Activated CD4-positive, alpha-beta memory T cell treated with anti-CD3 and anti-CD28 coated beads for 36 hours (primary cell): ENCODE measurements at regions of chr6 and their contacts with region 1.

Region 1: GRCh38 chr6:28266962-28267694 is at the start of gene ZSCAN26:
- DNase-seq: peak; percentile 89
- H3K4me3 Mint-ChIP-seq: no peak within 1 kb of the TSS
- H3K27ac Mint-ChIP-seq: no peak within 1 kb of the TSS
- H3K4me1 Mint-ChIP-seq: peaks cover 36% of the 10 kb centered on the region
- H3K27me3 Mint-ChIP-seq: no peaks in the 10 kb centered on the region
- total RNA-seq, gene ZSCAN26: 6.0 to 6.4 TPM

Region 2: GRCh38 chr6:27374824-27375612 is 892.1 kb before region 1 on chr6:
- CTCF ChIA-PET with region 1: no interaction called
- POLR2A ChIA-PET with region 1: no interaction called
- intact Hi-C with region 1: no loop called
- DNase-seq: peak; percentile 86
- H3K4me3 Mint-ChIP-seq: peak overlapping the region; percentile 81
- H3K27ac Mint-ChIP-seq: peak overlapping the region; percentile 59
- H3K4me1 Mint-ChIP-seq: peaks cover 19% of the 10 kb centered on the region
- H3K27me3 Mint-ChIP-seq: no peaks in the 10 kb centered on the region

Region 3: GRCh38 chr6:28080631-28081485 is 186.3 kb before region 1 on chr6:
- CTCF ChIA-PET with region 1: no interaction called
- POLR2A ChIA-PET with region 1: no interaction called
- intact Hi-C with region 1: loop called (anchors 5 kb)
- DNase-seq: peak; percentile 92
- H3K4me3 Mint-ChIP-seq: peak overlapping the region; percentile 96
- H3K27ac Mint-ChIP-seq: peak overlapping the region; percentile 97
- H3K4me1 Mint-ChIP-seq: peaks cover 20% of the 10 kb centered on the region
- H3K27me3 Mint-ChIP-seq: no peaks in the 10 kb centered on the region

Region 4: GRCh38 chr6:28212510-28213212 is 54.5 kb before region 1 on chr6:
- CTCF ChIA-PET with region 1: no interaction called
- POLR2A ChIA-PET with region 1: no interaction called
- intact Hi-C with region 1: loop called (anchors 5 kb)
- DNase-seq: peak; percentile 80
- H3K4me3 Mint-ChIP-seq: peak overlapping the region; percentile 75
- H3K27ac Mint-ChIP-seq: peak overlapping the region; percentile 59
- H3K4me1 Mint-ChIP-seq: peaks cover 19% of the 10 kb centered on the region
- H3K27me3 Mint-ChIP-seq: peaks cover 67% of the 10 kb centered on the region

Region 5: GRCh38 chr6:28252009-28252975 is 14.8 kb before region 1 on chr6 and contains the start of gene ZKSCAN4:
- CTCF ChIA-PET with region 1: interaction called, 10 read pairs
- POLR2A ChIA-PET with region 1: interaction called, 12 read pairs
- intact Hi-C with region 1: loop called (anchors 1 kb)
- DNase-seq: peak; percentile 84
- H3K4me3 Mint-ChIP-seq: peak within 1 kb of the TSS; percentile 98
- H3K27ac Mint-ChIP-seq: peak within 1 kb of the TSS; percentile 73
- H3K4me1 Mint-ChIP-seq: peaks cover 17% of the 10 kb centered on the region
- H3K27me3 Mint-ChIP-seq: no peaks in the 10 kb centered on the region
- total RNA-seq, gene ZKSCAN4: 3.7 to 3.8 TPM

Region 6: GRCh38 chr6:28281288-28282064 is 14.3 kb after region 1 on chr6 and contains the start of gene PGBD1:
- CTCF ChIA-PET with region 1: interaction called, 4 read pairs
- POLR2A ChIA-PET with region 1: no interaction called
- intact Hi-C with region 1: loop called (anchors 1 kb)
- DNase-seq: peak; percentile 68
- H3K4me3 Mint-ChIP-seq: peak within 1 kb of the TSS; percentile 76
- H3K27ac Mint-ChIP-seq: no peak within 1 kb of the TSS
- H3K4me1 Mint-ChIP-seq: peaks cover 11% of the 10 kb centered on the region
- H3K27me3 Mint-ChIP-seq: peaks cover 15% of the 10 kb centered on the region
- total RNA-seq, gene PGBD1: 1.6 to 1.9 TPM

Region 7: GRCh38 chr6:28335564-28336283 is 68.6 kb after region 1 on chr6 and contains the start of gene ZSCAN31:
- CTCF ChIA-PET with region 1: no interaction called
- POLR2A ChIA-PET with region 1: interaction called, 6 read pairs
- intact Hi-C with region 1: loop called (anchors 5 kb)
- DNase-seq: peak; percentile 88
- H3K4me3 Mint-ChIP-seq: no peak within 1 kb of the TSS
- H3K27ac Mint-ChIP-seq: no peak within 1 kb of the TSS
- H3K4me1 Mint-ChIP-seq: no peaks in the 10 kb centered on the region
- H3K27me3 Mint-ChIP-seq: no peaks in the 10 kb centered on the region
- total RNA-seq, gene ZSCAN31: 0.77 to 1.6 TPM